ENCODE measurements at regions of chr20 and their contacts with region 1.

Region 1: GRCh38 chr20:20593447-20594170 is 118.8 kb downstream of the RALGAPA2 start:
- DNase-seq: peak; percentile 23 to 61
- H3K4me3 ChIP-seq: no peak overlapping the region
- H3K27ac ChIP-seq: no peak overlapping the region
- H3K4me1 ChIP-seq: no peaks in the 10 kb centered on the region
- H3K27me3 ChIP-seq: no peaks in the 10 kb centered on the region
- CTCF ChIP-seq: peak; percentile 63 to 95 (median 92)
- EP300 ChIP-seq: no peak
- POLR2A ChIP-seq: no peak
- RAD21 ChIP-seq: peak; percentile 68 to 82

Region 2: DNA sequence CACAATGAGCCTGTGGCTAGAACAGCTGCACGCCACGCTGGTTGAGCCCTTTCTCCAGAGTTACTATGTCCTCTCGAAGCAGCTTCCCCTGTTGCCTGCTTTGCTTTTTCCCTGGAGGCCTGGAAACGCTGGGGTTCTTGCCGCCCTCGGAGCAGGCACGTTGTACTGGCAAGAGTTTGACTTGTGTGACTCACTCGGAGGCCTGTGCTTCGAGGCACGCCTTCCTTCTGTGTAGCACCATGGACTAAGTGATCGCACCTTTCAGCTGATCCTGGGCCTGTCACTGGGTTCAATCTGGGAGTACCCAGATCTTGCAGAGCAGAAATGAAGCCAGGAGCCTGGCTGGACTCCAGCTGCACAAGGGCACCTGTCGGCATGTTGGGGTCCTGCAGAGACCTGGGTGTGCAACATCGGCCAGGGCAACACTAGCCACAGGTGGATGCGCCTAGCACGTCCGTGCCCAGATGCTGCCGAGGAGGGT is 220.5 kb before region 1 on chr20:
- CTCF ChIA-PET with region 1: interaction called, 10 read pairs
- POLR2A ChIA-PET with region 1: no interaction called
- DNase-seq: no peak
- H3K4me3 ChIP-seq: no peak overlapping the region
- H3K27ac ChIP-seq: no peak overlapping the region
- H3K4me1 ChIP-seq: peaks cover 9 to 33% (median 15%) of the 10 kb centered on the region in 4 experiments
- H3K27me3 ChIP-seq: peaks cover 18 to 55% (median 39%) of the 10 kb centered on the region in 4 experiments
- CTCF ChIP-seq: no peak
- EP300 ChIP-seq: no peak
- POLR2A ChIP-seq: no peak
- RAD21 ChIP-seq: no peak

Region 3: GRCh38 chr20:20407891-20408805 is 185.5 kb before region 1 on chr20:
- CTCF ChIA-PET with region 1: interaction called, 11 read pairs
- POLR2A ChIA-PET with region 1: no interaction called
- DNase-seq: no peak
- H3K4me3 ChIP-seq: no peak overlapping the region
- H3K27ac ChIP-seq: no peak overlapping the region
- H3K4me1 ChIP-seq: peaks cover 0 to 17% (median 11%) of the 10 kb centered on the region in 4 experiments; a peak in 4 of 7 replicates
- H3K27me3 ChIP-seq: no peaks in the 10 kb centered on the region
- CTCF ChIP-seq: peak in 2 of 3 experiments; percentile 28 to 50; a peak in 2 of 4 replicates
- EP300 ChIP-seq: no peak
- POLR2A ChIP-seq: no peak
- RAD21 ChIP-seq: peak; percentile 53 to 62

Region 4: DNA sequence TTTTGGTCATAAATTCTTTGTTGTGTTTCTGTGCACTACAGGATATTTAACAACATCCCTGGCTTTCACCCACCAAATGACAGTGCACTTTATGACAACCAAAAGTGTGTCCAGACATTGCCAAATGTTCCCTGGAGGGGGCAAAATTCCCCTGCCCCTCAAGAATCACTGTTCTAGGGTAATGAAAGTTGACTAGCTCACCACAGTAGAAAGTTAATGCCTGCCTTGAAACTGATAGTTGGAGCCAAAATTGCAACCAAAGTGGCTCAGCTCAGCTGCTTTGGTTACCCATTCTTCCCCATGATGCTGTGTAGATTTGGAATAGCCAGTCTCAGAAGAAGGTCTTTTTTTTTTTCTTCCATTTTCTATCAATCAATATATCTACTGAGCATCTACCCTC is 31.8 kb before region 1 on chr20:
- CTCF ChIA-PET with region 1: interaction called, 16 read pairs
- POLR2A ChIA-PET with region 1: no interaction called
- DNase-seq: no peak
- H3K4me3 ChIP-seq: no peak overlapping the region
- H3K27ac ChIP-seq: no peak overlapping the region
- H3K4me1 ChIP-seq: peaks cover 0 to 7% (median 1%) of the 10 kb centered on the region in 4 experiments; a peak in 1 of 7 replicates
- H3K27me3 ChIP-seq: no peaks in the 10 kb centered on the region
- CTCF ChIP-seq: no peak
- EP300 ChIP-seq: no peak
- POLR2A ChIP-seq: no peak
- RAD21 ChIP-seq: no peak

Region 5: GRCh38 chr20:20582734-20583133 is 10.9 kb before region 1 on chr20:
- CTCF ChIA-PET with region 1: interaction called, 24 read pairs
- POLR2A ChIA-PET with region 1: no interaction called
- DNase-seq: no peak
- H3K4me3 ChIP-seq: no peak overlapping the region
- H3K27ac ChIP-seq: no peak overlapping the region
- H3K4me1 ChIP-seq: peaks cover 0 to 5% (median 1%) of the 10 kb centered on the region in 4 experiments; a peak in 2 of 7 replicates
- H3K27me3 ChIP-seq: no peaks in the 10 kb centered on the region
- CTCF ChIP-seq: no peak
- EP300 ChIP-seq: no peak
- POLR2A ChIP-seq: no peak
- RAD21 ChIP-seq: no peak

Region 6: DNA sequence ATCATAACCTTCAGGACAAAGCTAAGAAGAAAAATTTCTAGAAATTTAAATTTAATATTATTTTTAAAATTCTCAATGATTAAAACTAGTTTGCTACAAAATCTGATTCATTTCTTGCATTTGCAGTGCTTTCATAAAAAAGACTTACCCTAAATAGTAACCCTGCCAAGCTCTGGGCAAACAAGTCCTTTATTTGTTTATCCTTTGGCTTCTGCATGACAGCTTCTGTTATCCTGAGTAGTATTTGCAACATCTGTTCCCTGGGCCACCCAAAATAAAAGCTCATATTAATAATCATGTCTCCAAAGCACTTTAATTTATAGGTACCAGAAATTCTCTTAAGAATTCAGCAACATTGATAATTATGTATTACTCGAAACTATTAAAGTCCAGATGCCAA is 17.6 kb after region 1 on chr20:
- CTCF ChIA-PET with region 1: interaction called, 11 read pairs
- POLR2A ChIA-PET with region 1: no interaction called
- DNase-seq: no peak
- H3K4me3 ChIP-seq: no peak overlapping the region
- H3K27ac ChIP-seq: no peak overlapping the region
- H3K4me1 ChIP-seq: no peaks in the 10 kb centered on the region
- H3K27me3 ChIP-seq: no peaks in the 10 kb centered on the region; a peak in 1 of 7 replicates
- CTCF ChIP-seq: no peak
- EP300 ChIP-seq: no peak
- POLR2A ChIP-seq: no peak
- RAD21 ChIP-seq: no peak

Region 7: DNA sequence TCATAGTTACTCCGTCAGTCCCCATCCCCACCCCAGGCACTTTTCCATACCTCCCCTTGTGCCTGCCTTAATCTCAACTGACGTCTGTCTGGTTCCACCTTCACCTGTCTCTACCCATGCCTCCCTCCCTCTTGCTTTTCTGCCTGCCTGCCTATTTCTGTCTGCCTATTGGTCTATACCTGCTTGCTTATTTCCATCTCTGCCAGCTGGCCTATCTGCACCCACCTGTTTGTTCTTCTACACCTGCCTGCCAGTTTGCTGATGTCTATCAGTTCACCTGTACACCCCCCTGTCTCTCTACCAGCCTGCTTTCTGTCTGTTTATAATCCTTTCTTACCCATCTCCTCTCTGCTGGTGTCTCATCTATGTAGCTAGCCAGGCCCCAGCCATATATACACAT is 31.3 kb after region 1 on chr20:
- CTCF ChIA-PET with region 1: no interaction called
- POLR2A ChIA-PET with region 1: no interaction called
- DNase-seq: no peak
- H3K4me3 ChIP-seq: no peak overlapping the region
- H3K27ac ChIP-seq: no peak overlapping the region
- H3K4me1 ChIP-seq: no peaks in the 10 kb centered on the region
- H3K27me3 ChIP-seq: no peaks in the 10 kb centered on the region
- CTCF ChIP-seq: no peak
- EP300 ChIP-seq: no peak
- POLR2A ChIP-seq: no peak
- RAD21 ChIP-seq: no peak

Measured in H1 (cell line).